ENCODE measurements at regions of chr1 and their contacts with region 1.

Region 1: GRCh38 chr1:11037740-11038182 is 9.3 kb downstream of the MASP2 start:
- DNase-seq: peak; percentile 37 to 93
- H3K4me3 ChIP-seq: no peak overlapping the region
- H3K27ac ChIP-seq: no peak overlapping the region
- H3K4me1 ChIP-seq: peaks cover 0 to 4% of the 10 kb centered on the region in 2 donors
- H3K27me3 ChIP-seq: no peaks in the 10 kb centered on the region
- CTCF ChIP-seq: peak; percentile 92 to 97 (median 95)

Region 2: DNA sequence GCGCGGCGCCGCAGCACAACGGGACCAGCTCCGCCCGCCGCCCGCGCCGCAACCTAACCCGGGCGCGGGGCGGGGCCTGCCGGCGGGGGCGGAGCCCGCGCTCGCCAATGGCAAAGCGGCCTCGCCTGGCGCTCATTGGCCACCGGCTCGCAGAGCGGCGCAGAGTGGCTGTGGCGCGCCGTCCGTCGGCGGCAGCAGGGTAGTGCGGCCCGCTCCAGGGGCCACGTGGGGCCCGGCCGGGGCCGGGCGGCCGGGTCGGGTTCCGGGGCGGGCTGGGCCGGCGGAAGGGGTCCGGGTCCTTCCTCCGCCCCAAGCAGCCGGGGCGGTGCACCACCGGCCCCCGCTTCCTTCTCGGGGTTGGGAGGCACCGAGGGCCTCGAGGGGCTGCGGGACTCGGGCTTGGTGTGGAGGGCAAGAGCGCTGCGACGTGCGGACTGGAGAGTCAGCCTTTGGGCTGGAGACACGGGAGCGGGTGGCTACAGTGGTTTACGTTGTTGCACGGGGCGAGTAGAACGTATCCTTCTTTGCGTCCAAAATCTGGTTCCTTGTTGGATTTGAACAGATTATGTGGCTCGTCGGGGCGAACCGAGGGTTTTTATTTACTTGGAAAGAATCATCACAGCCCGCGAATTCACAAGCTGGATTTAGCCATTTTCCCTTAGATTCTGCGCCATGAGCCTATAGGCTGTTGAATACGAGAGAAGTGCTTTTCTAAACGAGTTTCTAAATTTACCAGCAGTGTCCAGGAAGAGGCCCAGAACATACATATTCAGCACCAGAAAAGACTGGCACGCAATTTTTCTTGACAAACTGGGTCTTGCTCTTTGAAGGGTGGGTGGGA is 22.4 kb after region 1 on chr1 and contains the start of gene SRM:
- intact Hi-C with region 1: loop called (anchors 1 kb)
- DNase-seq: peak; percentile 66 to 95
- H3K4me3 ChIP-seq: peak within 1 kb of the TSS; percentile 95 to 100
- H3K27ac ChIP-seq: peak within 1 kb of the TSS; percentile 52 to 66
- H3K4me1 ChIP-seq: peaks cover 11 to 16% of the 10 kb centered on the region in 2 donors
- H3K27me3 ChIP-seq: no peaks in the 10 kb centered on the region
- CTCF ChIP-seq: peak in 2 of 3 experiments; percentile 28 to 84
- total RNA-seq, gene SRM: 175 TPM

Region 3: DNA sequence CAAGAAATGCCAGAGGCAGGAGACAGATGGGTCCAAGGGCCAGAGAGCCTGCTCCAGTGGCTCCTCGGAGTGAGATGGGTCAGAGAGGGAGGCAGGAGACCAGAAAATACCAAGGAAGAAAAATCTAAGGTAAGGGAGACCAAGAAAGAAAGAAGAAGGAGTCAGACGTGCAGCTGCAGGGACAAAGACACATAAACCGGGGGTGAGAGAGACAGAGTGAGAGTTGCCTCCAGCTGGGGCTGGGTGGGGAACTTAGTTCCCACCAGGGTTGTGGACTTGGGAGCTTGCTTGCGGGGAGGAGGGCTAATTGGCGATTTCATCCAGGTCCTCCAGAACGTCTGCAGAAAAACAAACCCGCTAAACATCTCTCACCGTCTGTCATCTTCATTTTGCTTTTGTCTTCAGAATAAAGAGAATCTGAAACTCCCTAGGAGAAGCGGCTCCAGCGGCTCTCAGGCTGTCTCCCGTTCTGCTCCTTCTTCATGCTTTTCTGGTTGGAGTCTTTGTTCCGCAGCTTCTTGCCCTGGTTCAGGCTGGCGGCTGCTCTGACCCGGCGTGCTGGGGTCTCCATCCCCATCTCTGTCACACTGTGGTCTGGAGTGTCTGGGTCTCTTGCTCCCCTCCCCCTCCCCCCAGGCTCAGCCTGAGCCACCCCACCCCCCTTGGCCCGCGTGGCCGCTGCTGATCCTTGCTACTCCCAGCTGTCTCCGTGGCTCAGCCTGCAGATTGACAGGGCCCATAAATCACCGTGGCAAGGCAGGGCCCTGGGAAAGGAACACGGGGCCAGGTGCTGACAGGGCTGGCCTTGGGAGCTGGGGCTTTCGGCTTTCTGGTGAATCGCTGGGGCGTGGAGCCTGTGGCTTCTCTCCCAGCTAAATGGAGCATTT is 301.8 kb after region 1 on chr1:
- intact Hi-C with region 1: no loop called
- DNase-seq: no peak
- H3K4me3 ChIP-seq: no peak overlapping the region
- H3K27ac ChIP-seq: no peak overlapping the region
- H3K4me1 ChIP-seq: no peaks in the 10 kb centered on the region
- H3K27me3 ChIP-seq: no peaks in the 10 kb centered on the region
- CTCF ChIP-seq: no peak

Region 4: GRCh38 chr1:11641776-11642305 is 604.1 kb after region 1 on chr1:
- intact Hi-C with region 1: loop called (anchors 1 kb)
- DNase-seq: no peak
- H3K4me3 ChIP-seq: no peak overlapping the region
- H3K27ac ChIP-seq: no peak overlapping the region
- H3K4me1 ChIP-seq: no peaks in the 10 kb centered on the region
- H3K27me3 ChIP-seq: no peaks in the 10 kb centered on the region
- CTCF ChIP-seq: no peak

Region 5: GRCh38 chr1:11979851-11980675 is 942.3 kb after region 1 on chr1 and contains the start of gene MFN2:
- intact Hi-C with region 1: no loop called
- DNase-seq: peak; percentile 87 to 97
- H3K4me3 ChIP-seq: peak within 1 kb of the TSS; percentile 91 to 92
- H3K27ac ChIP-seq: peak within 1 kb of the TSS; percentile 89 to 95
- H3K4me1 ChIP-seq: peaks cover 0 to 11% of the 10 kb centered on the region in 2 donors
- H3K27me3 ChIP-seq: no peaks in the 10 kb centered on the region
- CTCF ChIP-seq: no peak
- total RNA-seq, gene MFN2: 85.6 TPM

Measured in ascending aorta (tissue), 2 donors.